ENCODE measurements at regions of chr10 and their contacts with region 1.

Region 1: GRCh38 chr10:107971973-107972372 is 807.5 kb upstream of the SORCS1 start:
- DNase-seq: peak; percentile 93
- ATAC-seq: peak; percentile 82
- H3K4me3 ChIP-seq: no peak overlapping the region
- H3K27ac ChIP-seq: peak overlapping the region; percentile 99
- H3K4me1 ChIP-seq: peaks cover 34% of the 10 kb centered on the region
- H3K27me3 ChIP-seq: no peaks in the 10 kb centered on the region
- CTCF ChIP-seq: no peak

Region 2: GRCh38 chr10:108187408-108188012 is 215.5 kb after region 1 on chr10:
- CTCF ChIA-PET with region 1: no interaction called
- POLR2A ChIA-PET with region 1: no interaction called
- intact Hi-C with region 1: loop called (anchors 5 kb)
- DNase-seq: peak; percentile 60
- ATAC-seq: peak; percentile 95
- H3K4me3 ChIP-seq: no peak overlapping the region
- H3K27ac ChIP-seq: peak overlapping the region; percentile 25
- H3K4me1 ChIP-seq: peaks cover 18% of the 10 kb centered on the region
- H3K27me3 ChIP-seq: no peaks in the 10 kb centered on the region
- CTCF ChIP-seq: no peak

Measured in PC-3 (cell line).